Vagina (tissue), 2 donors: ENCODE measurements at regions of chr12 and their contacts with region 1.

Region 1: DNA sequence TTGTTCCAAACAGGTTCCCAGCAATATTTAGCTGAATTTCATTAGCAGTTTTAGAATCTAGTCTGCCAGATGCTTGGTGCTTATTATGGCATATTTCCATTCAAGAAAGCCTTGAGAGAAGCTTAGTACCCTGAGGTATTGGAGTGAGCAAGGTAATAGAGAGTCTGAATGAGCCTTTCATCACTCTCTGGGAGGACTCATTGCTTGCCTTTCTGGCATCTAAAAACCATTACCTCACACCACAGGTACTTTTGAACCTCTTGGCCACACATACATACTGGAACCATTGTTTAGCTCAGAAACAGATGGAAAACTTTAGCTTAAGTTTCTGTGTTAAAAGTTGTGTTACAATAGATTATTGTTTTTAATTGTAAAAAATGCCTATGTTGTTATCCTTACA is 27.4 kb upstream of the KCNH3 start:
- DNase-seq: no peak
- H3K4me3 ChIP-seq: no peak overlapping the region
- H3K27ac ChIP-seq: no peak overlapping the region
- H3K4me1 ChIP-seq: no peaks in the 10 kb centered on the region
- H3K27me3 ChIP-seq: no peaks in the 10 kb centered on the region
- CTCF ChIP-seq: no peak
- POLR2A ChIP-seq: no peak

Region 2: DNA sequence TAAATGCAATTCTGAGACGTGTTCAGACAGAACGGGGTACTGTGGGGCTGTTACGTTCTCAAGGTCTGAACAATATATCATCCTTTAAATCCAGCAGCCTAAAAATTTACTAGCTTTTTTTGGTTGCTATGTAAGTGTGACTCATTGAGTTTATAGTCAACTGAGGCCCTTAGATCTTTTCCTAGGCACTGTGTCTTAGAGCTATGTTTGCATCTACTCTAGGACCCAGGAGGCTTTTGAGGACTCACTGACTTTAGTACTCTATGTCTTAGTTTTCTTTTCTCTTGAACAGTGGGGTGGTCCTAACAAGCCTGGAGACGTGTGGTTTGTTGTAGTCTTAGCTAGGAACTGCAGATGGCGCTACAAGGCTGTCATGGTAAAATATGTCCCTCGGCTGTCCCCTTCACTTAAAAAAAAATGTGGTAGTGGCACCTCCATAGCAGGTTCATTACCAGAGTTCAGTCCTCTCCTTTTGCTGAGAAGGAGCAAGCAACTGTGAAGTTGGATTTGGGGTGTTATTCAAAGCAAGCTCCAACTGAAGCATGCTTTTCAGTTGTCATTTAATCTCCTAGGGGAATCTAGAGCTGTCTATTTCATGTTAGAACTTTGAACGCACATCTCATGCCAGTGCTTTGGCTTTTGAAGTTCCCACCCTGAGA is 152.8 kb before region 1 on chr12:
- intact Hi-C with region 1: loop called (anchors 5 kb)
- DNase-seq: no peak
- H3K4me3 ChIP-seq: no peak overlapping the region
- H3K27ac ChIP-seq: no peak overlapping the region
- H3K4me1 ChIP-seq: peaks cover 11% of the 10 kb centered on the region
- H3K27me3 ChIP-seq: no peaks in the 10 kb centered on the region
- CTCF ChIP-seq: peak; percentile 56 to 65 (median 59)
- POLR2A ChIP-seq: no peak